Endothelial cell of umbilical vein (primary cell): ENCODE measurements at regions of chr4 and their contacts with region 1.

Region 1: GRCh38 chr4:108834835-108835384 is 72.1 kb upstream of the ETNPPL start:
- DNase-seq: peak; percentile 53
- H3K4me3 ChIP-seq: no peak overlapping the region
- H3K27ac ChIP-seq: no peak overlapping the region
- H3K4me1 ChIP-seq: no peaks in the 10 kb centered on the region
- H3K27me3 ChIP-seq: peaks cover 0 to 6% of the 10 kb centered on the region in 2 experiments
- CTCF ChIP-seq: peak; percentile 49 to 60
- POLR2A ChIP-seq: no peak

Region 2: GRCh38 chr4:108683479-108683878 is 151.4 kb before region 1 on chr4:
- CTCF ChIA-PET with region 1: no interaction called
- POLR2A ChIA-PET with region 1: no interaction called
- dilution Hi-C with region 1: no loop called
- intact Hi-C with region 1: loop called (anchors 2 kb)
- DNase-seq: peak; percentile 51
- H3K4me3 ChIP-seq: no peak overlapping the region
- H3K27ac ChIP-seq: no peak overlapping the region
- H3K4me1 ChIP-seq: peaks cover 4% of the 10 kb centered on the region
- H3K27me3 ChIP-seq: no peaks in the 10 kb centered on the region
- CTCF ChIP-seq: peak in 1 of 2 donors; percentile 24
- POLR2A ChIP-seq: no peak

Region 3: GRCh38 chr4:108902769-108903168 is 67.9 kb after region 1 on chr4:
- CTCF ChIA-PET with region 1: no interaction called
- POLR2A ChIA-PET with region 1: no interaction called
- dilution Hi-C with region 1: no loop called
- intact Hi-C with region 1: no loop called
- DNase-seq: no peak
- H3K4me3 ChIP-seq: no peak overlapping the region
- H3K27ac ChIP-seq: no peak overlapping the region
- H3K4me1 ChIP-seq: no peaks in the 10 kb centered on the region
- H3K27me3 ChIP-seq: peaks cover 0 to 4% of the 10 kb centered on the region in 2 experiments
- CTCF ChIP-seq: no peak
- POLR2A ChIP-seq: no peak

Region 4: DNA sequence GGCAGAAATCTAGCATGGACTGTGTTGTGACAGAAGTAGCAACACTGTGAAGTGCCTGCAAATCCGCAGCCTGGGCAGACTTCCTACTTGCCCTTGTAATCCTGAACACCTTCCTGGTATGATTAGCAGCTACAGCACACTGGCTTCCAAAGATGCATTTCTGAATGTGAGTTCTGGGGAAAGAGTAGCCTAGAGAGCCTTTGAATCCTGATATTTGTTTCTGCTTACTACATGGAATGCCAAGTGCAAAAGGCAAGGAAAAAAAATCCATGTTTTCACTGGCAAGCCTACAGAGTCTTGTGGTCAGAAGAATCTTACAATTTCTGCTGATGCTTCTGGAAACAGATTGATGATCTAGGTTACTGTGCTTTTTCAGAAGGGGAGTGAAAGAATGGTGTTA is 243.8 kb after region 1 on chr4:
- CTCF ChIA-PET with region 1: no interaction called
- POLR2A ChIA-PET with region 1: no interaction called
- dilution Hi-C with region 1: no loop called
- intact Hi-C with region 1: loop called (anchors 2 kb)
- DNase-seq: peak; percentile 48
- H3K4me3 ChIP-seq: no peak overlapping the region
- H3K27ac ChIP-seq: no peak overlapping the region
- H3K4me1 ChIP-seq: peaks cover 18% of the 10 kb centered on the region
- H3K27me3 ChIP-seq: no peaks in the 10 kb centered on the region
- CTCF ChIP-seq: no peak
- POLR2A ChIP-seq: no peak

Region 5: DNA sequence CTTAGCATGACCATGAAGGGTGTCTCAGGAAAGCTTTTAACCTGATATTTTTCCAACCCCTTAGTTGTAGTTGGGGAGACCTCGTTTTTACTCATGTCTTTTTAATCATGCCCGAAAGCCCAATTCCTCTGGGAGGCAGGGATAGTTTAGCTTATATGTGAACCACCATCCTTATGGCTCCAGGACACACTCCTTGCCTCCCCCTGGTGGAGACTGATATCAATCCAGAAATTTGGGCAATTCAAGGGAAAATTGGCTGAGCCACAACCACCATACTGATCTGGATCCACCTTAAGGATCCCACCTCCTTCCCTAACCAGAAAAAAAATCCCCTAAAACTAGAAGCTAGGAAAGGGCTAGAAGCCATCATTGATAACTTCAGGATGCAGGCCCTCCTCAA is 480.9 kb after region 1 on chr4:
- CTCF ChIA-PET with region 1: interaction called, 9 read pairs
- POLR2A ChIA-PET with region 1: no interaction called
- dilution Hi-C with region 1: no loop called
- intact Hi-C with region 1: loop called (anchors 1 kb)
- DNase-seq: peak; percentile 13
- H3K4me3 ChIP-seq: no peak overlapping the region
- H3K27ac ChIP-seq: no peak overlapping the region
- H3K4me1 ChIP-seq: no peaks in the 10 kb centered on the region
- H3K27me3 ChIP-seq: peaks cover 0 to 2% of the 10 kb centered on the region in 2 experiments
- CTCF ChIP-seq: peak; percentile 27 to 37
- POLR2A ChIP-seq: no peak

Region 6: GRCh38 chr4:109406338-109406931 is 571.5 kb after region 1 on chr4:
- CTCF ChIA-PET with region 1: interaction called, 30 read pairs
- POLR2A ChIA-PET with region 1: no interaction called
- dilution Hi-C with region 1: no loop called
- intact Hi-C with region 1: loop called (anchors 1 kb)
- DNase-seq: peak; percentile 75
- H3K4me3 ChIP-seq: no peak overlapping the region
- H3K27ac ChIP-seq: no peak overlapping the region
- H3K4me1 ChIP-seq: no peaks in the 10 kb centered on the region
- H3K27me3 ChIP-seq: no peaks in the 10 kb centered on the region
- CTCF ChIP-seq: peak; percentile 51 to 53
- POLR2A ChIP-seq: no peak